Activated naive CD4-positive, alpha-beta T cell treated with anti-CD3 and anti-CD28 coated beads for 36 hours (primary cell): ENCODE measurements at regions of chr14 and their contacts with region 1.

Region 1: DNA sequence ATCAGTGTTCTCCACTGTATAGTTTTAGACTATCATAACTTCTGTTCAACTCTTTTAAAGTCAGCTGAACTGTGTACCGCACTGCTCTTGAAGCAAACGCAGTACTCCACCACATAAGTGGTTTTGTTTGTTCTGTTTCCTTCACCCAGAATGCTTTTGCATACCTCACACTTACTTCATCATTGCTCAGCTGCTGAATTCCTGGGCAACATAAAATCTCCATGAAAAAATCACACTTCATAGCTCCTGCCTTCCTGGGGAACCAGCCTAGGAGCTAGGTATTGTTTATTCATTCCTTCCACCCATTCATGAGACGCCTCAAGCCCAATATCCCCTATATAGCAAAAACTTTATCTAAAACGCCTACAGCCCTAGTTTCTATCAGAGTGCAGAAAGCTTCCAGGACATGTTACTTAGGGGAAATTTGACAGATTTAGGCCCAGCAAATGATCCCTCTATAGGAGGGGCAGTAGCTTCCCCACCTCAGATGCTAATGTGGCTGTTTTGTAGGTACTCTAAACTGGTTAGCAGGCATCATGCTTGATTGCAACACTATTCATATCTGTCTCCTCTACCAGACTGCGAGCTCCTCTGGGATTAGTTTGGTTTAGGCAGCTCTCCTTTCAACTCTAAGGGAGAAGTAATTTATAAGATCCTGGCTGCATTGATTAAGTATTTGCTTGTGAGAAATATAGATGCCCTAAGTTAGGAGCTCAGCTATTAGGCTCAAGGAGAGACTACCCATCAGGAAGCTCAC is 44.5 kb downstream of the LRRC9 start:
- DNase-seq: no peak
- H3K4me3 Mint-ChIP-seq: peak overlapping the region; percentile 71
- H3K27ac Mint-ChIP-seq: peak overlapping the region; percentile 5
- H3K4me1 Mint-ChIP-seq: peaks cover 12% of the 10 kb centered on the region
- H3K27me3 Mint-ChIP-seq: no peaks in the 10 kb centered on the region

Region 2: DNA sequence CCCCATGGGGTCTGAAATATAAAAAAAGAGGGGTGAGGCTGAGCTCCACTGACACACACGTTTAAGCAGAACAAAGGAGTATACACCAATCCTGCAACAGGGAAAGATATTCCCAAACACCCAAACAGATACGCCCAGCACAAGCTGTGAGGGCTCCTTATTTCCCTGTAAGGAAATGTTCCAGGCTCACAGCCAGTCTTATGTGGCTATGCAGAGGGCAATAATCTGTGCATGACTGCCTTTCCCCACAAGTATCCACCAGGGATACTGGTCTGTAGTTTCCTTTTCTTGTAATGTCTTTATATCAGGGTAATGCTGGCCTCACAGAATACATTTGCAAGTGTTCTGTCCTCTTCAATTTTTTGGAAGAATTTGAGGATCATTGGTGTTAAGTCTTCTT is 917.7 kb before region 1 on chr14:
- CTCF ChIA-PET with region 1: no interaction called
- intact Hi-C with region 1: no loop called
- DNase-seq: no peak
- H3K4me3 Mint-ChIP-seq: no peak overlapping the region
- H3K27ac Mint-ChIP-seq: no peak overlapping the region
- H3K4me1 Mint-ChIP-seq: no peaks in the 10 kb centered on the region
- H3K27me3 Mint-ChIP-seq: peaks cover 4% of the 10 kb centered on the region

Region 3: GRCh38 chr14:59150990-59151389 is 813.4 kb before region 1 on chr14:
- CTCF ChIA-PET with region 1: no interaction called
- intact Hi-C with region 1: no loop called
- DNase-seq: no peak
- H3K4me3 Mint-ChIP-seq: no peak overlapping the region
- H3K27ac Mint-ChIP-seq: no peak overlapping the region
- H3K4me1 Mint-ChIP-seq: peaks cover 6% of the 10 kb centered on the region
- H3K27me3 Mint-ChIP-seq: no peaks in the 10 kb centered on the region

Region 4: GRCh38 chr14:59926534-59926933 is 37.9 kb before region 1 on chr14:
- CTCF ChIA-PET with region 1: no interaction called
- intact Hi-C with region 1: loop called (anchors 2 kb)
- DNase-seq: no peak
- H3K4me3 Mint-ChIP-seq: no peak overlapping the region
- H3K27ac Mint-ChIP-seq: no peak overlapping the region
- H3K4me1 Mint-ChIP-seq: peaks cover 14% of the 10 kb centered on the region
- H3K27me3 Mint-ChIP-seq: peaks cover 20% of the 10 kb centered on the region

Region 5: GRCh38 chr14:60064491-60065072 is 100.2 kb after region 1 on chr14:
- CTCF ChIA-PET with region 1: interaction called, 4 read pairs
- intact Hi-C with region 1: loop called (anchors 2 kb)
- DNase-seq: no peak
- H3K4me3 Mint-ChIP-seq: no peak overlapping the region
- H3K27ac Mint-ChIP-seq: no peak overlapping the region
- H3K4me1 Mint-ChIP-seq: no peaks in the 10 kb centered on the region
- H3K27me3 Mint-ChIP-seq: peaks cover 1% of the 10 kb centered on the region

Region 6: DNA sequence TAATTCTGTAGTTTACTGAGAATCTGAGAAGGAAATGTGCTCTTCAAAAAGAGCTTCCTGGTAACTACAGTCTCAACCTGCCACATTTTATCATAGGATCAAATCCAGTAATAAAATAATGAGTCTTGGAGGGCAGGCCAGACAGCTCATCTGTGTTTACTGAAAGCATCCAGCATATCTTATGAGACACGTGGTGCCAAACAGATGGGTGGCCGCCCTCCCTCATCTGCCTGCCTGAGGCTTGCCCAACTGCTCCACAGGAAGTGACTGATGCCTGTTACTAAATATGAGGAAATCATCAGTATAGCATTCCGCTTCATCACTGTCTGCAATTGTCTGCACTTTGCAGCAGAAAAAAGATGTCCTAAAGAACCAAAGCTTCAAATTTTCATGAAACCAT is 187.3 kb after region 1 on chr14:
- CTCF ChIA-PET with region 1: interaction called, 4 read pairs
- intact Hi-C with region 1: loop called (anchors 1 kb)
- DNase-seq: peak; percentile 87
- H3K4me3 Mint-ChIP-seq: no peak overlapping the region
- H3K27ac Mint-ChIP-seq: peak overlapping the region; percentile 86
- H3K4me1 Mint-ChIP-seq: peaks cover 30% of the 10 kb centered on the region
- H3K27me3 Mint-ChIP-seq: no peaks in the 10 kb centered on the region

Region 7: GRCh38 chr14:60331201-60332045 is 367.0 kb after region 1 on chr14:
- CTCF ChIA-PET with region 1: interaction called, 4 read pairs
- intact Hi-C with region 1: loop called (anchors 2 kb)
- DNase-seq: peak; percentile 91
- H3K4me3 Mint-ChIP-seq: peak overlapping the region; percentile 83
- H3K27ac Mint-ChIP-seq: peak overlapping the region; percentile 89
- H3K4me1 Mint-ChIP-seq: peaks cover 32% of the 10 kb centered on the region
- H3K27me3 Mint-ChIP-seq: peaks cover 17% of the 10 kb centered on the region